Activated naive CD4-positive, alpha-beta T cell treated with anti-CD3 and anti-CD28 coated beads for 36 hours (primary cell): ENCODE measurements at regions of chrX and their contacts with region 1.

Region 1: DNA sequence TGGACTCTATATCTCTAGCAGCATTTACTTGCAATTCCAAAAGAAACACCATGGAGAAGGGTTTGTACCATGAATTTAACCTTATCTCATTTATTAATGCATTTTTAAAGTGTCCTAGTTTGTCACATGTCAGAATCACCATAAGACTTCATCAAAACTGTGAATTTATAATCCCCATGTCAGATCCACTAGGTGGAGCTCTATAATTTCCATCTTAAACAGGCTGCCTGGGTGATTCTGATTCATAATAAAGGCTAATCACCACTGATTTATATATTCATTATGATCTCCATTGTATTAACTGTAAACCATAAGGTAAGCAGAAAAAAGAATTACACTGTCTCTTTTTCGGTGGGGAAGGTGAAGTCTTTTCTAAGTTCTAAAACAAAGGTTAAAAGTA is 4.0 kb downstream of the TCEAL2 start:
- DNase-seq: no peak
- H3K4me3 Mint-ChIP-seq: no peak overlapping the region
- H3K27ac Mint-ChIP-seq: no peak overlapping the region
- H3K4me1 Mint-ChIP-seq: peaks cover 4% of the 10 kb centered on the region
- H3K27me3 Mint-ChIP-seq: peaks cover 27% of the 10 kb centered on the region

Region 2: GRCh38 chrX:101999644-102000539 is 129.6 kb before region 1 on chrX:
- CTCF ChIA-PET with region 1: no interaction called
- intact Hi-C with region 1: no loop called
- DNase-seq: no peak
- H3K4me3 Mint-ChIP-seq: no peak overlapping the region
- H3K27ac Mint-ChIP-seq: no peak overlapping the region
- H3K4me1 Mint-ChIP-seq: no peaks in the 10 kb centered on the region
- H3K27me3 Mint-ChIP-seq: peaks cover 11% of the 10 kb centered on the region

Region 3: DNA sequence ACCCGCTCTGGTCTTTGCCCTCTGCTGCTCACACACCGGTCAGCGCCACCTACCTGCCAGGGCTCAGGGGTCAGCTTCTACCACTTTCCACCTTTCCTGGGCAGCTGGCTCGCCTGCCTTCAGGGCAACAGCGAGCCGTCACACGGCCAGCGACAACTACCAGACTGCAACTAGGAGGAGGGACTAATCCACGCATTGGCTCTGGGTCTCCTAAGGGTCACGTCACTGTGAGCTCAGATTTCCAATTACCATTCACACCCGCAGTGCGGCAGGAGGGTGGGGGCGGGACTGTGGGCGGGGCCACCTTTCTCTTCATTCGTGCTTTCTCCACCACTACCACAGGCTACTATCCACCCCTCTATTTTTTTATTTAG is 26.3 kb after region 1 on chrX and contains the start of gene BEX5:
- CTCF ChIA-PET with region 1: no interaction called
- intact Hi-C with region 1: no loop called
- DNase-seq: peak; percentile 73
- H3K4me3 Mint-ChIP-seq: peak within 1 kb of the TSS; percentile 98
- H3K27ac Mint-ChIP-seq: peak within 1 kb of the TSS; percentile 84
- H3K4me1 Mint-ChIP-seq: peaks cover 11% of the 10 kb centered on the region
- H3K27me3 Mint-ChIP-seq: peaks cover 3% of the 10 kb centered on the region
- total RNA-seq, gene BEX5: 6.6 to 7.2 TPM

Region 4: DNA sequence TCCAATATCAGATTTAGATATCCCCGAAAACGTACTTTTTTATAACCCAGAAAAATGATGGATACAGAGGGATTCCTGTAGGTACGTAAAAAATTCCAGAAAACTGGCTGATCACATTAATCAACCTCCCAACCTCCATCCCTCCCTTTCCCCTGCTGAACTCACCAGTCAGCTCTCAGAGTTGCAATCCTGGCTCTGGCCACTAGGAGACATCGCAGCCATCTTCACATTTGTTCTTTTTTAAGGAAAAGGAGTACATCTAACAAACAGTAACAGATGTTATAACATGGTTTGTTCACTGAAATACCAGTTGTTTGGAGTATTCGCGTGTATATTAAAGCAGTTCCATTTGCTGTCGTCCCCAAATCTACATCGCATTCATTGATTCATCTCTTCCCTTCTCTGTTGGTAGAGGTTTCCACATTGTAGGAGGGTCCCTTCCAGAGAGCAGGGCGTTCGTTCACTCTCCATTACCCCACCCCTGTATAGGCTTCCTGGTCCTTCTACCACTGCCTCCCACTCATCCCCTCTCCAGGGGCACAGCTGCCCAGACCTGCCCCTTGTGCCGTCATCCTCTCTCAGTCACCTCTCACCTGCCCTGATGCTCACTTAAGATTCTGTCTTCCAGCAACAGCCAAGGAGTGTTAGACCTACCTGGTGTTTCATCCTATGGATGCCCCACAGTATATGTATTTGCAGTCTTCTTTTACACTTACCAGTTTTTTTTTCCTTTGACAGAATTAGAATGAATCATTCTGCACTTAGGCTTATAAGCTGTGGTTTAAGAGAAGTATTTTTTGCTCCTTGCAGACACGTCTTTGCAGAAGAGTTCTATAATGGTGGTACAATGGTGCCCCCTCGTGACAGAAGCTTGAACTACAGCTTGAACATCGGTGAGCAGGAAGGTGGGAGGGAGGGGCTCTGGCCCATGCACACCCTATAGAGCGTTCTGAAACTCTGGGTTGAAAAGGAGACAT is 770.8 kb after region 1 on chrX:
- CTCF ChIA-PET with region 1: no interaction called
- intact Hi-C with region 1: loop called (anchors 10 kb)
- DNase-seq: peak; percentile 84
- H3K4me3 Mint-ChIP-seq: no peak overlapping the region
- H3K27ac Mint-ChIP-seq: no peak overlapping the region
- H3K4me1 Mint-ChIP-seq: peaks cover 6% of the 10 kb centered on the region
- H3K27me3 Mint-ChIP-seq: no peaks in the 10 kb centered on the region